Panc1 (cell line): ENCODE measurements at regions of chr15 and their contacts with region 1.

Region 1: DNA sequence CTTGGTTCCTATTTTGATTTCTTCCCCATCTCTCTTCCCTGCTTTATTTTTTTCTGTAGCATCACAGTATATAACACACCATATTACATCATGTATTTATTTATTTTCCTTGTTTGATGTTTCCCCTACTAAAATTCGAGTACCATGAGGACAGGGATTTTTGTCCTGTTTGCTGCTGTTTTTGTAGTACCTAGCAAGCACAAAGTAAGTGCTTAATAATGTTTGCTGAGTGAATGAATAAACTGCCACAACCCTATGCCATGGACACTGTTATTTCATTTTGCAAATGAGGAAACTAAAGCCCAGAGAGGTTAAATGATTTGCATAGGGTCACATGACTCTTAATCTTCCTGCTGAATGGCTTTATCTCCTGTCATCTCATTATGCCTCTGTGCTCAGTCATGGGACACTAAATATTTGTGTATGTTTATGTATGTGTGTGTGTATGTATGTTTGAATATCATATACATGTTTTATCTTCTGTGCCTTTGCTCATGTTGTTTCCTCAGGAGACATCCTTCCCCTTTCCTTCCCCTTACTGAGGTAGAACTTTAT is 26.1 kb upstream of the MGA start:
- DNase-seq: no peak
- ATAC-seq: no peak
- H3K4me3 ChIP-seq: no peak overlapping the region
- H3K27ac ChIP-seq: peak overlapping the region; percentile 36; the same call in 1 of the 2 replicates
- H3K4me1 ChIP-seq: peaks cover 35% of the 10 kb centered on the region
- H3K27me3 ChIP-seq: no peaks in the 10 kb centered on the region
- CTCF ChIP-seq: no peak

Region 2: GRCh38 chr15:41599061-41599460 is 35.1 kb before region 1 on chr15:
- CTCF ChIA-PET with region 1: interaction called, 3 read pairs
- POLR2A ChIA-PET with region 1: interaction called, 10 read pairs
- in situ Hi-C with region 1: no loop called
- intact Hi-C with region 1: no loop called
- DNase-seq: no peak
- ATAC-seq: no peak
- H3K4me3 ChIP-seq: no peak overlapping the region
- H3K27ac ChIP-seq: no peak overlapping the region
- H3K4me1 ChIP-seq: peaks cover 8% of the 10 kb centered on the region; the same call in 1 of the 2 replicates
- H3K27me3 ChIP-seq: no peaks in the 10 kb centered on the region
- CTCF ChIP-seq: no peak

Region 3: DNA sequence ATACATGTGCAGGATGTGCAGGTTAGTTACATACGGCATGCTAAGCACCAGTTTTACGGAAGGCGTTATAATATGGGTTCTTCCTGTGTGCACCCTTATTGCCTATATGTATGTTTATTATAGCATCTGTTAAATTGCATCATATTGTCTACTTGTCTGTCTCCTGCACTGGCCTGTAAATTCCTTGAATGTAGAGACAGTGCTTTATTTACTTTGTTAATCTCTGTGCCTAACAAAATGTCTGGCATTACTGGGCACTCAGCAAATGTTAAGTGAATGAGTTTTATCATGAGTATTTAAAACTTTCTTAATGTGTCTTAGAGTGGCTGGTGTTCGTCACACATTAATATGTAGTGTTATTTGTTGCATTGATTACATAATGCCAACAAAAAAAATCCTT is 49.8 kb after region 1 on chr15:
- CTCF ChIA-PET with region 1: no interaction called
- POLR2A ChIA-PET with region 1: no interaction called
- in situ Hi-C with region 1: no loop called
- intact Hi-C with region 1: no loop called
- DNase-seq: no peak
- ATAC-seq: peak; percentile 45; the same call in 1 of the 2 replicates
- H3K4me3 ChIP-seq: no peak overlapping the region
- H3K27ac ChIP-seq: peak overlapping the region; percentile 30; the same call in 1 of the 2 replicates
- H3K4me1 ChIP-seq: peaks cover 26% of the 10 kb centered on the region
- H3K27me3 ChIP-seq: no peaks in the 10 kb centered on the region
- CTCF ChIP-seq: no peak

Region 4: GRCh38 chr15:41695750-41696426 is 61.7 kb after region 1 on chr15:
- CTCF ChIA-PET with region 1: no interaction called
- POLR2A ChIA-PET with region 1: no interaction called
- in situ Hi-C with region 1: no loop called
- intact Hi-C with region 1: no loop called
- DNase-seq: no peak
- ATAC-seq: peak; percentile 60; the same call in 1 of the 2 replicates
- H3K4me3 ChIP-seq: no peak overlapping the region
- H3K27ac ChIP-seq: peak overlapping the region; percentile 60; the same call in 1 of the 2 replicates
- H3K4me1 ChIP-seq: peaks cover 22% of the 10 kb centered on the region
- H3K27me3 ChIP-seq: no peaks in the 10 kb centered on the region
- CTCF ChIP-seq: peak; percentile 60; the same call in 1 of the 2 replicates

Region 5: DNA sequence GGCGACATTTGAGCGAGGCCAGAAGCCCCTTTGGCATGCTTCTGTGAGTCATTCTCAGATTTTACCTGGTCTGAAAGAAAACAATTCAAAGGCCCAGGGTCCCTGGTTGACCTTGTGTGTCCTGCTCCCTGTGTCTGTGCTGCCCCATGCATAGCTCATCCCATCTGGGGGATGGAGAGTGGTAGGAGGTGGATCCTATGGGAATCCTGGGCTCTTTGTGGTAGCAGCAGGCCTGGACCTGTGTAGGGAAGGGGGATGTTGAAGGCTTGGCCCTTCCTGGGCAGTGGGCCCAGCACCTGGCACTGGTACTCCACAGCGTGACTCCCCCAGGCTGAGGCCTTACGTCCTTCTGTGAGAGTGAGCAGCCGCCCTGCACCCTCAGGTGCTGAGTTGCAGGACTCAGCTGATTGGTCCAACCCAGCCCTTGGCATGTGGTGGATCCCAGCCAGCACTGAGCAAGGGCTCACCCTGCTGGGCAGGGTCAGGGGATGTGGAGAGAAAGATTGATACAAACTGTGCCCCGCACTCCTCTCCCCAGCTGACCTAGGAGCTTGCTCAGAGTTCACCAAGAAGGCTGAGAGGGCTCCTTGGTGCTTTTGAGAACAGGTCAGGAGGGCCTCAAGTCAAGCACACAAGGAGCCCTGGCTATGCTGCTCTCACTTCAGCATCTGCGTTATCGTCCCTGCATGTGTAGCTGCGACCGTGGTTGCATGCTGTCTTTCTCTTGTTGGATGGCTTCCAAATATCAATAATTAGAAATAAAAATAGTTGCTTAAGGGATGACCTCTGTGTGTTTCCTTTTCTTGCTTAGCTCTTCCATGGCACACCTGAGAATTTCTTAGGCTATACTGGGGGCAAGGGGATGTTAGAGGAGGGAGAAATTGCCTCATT is 172.4 kb after region 1 on chr15:
- CTCF ChIA-PET with region 1: no interaction called
- POLR2A ChIA-PET with region 1: interaction called, 14 read pairs
- in situ Hi-C with region 1: no loop called
- intact Hi-C with region 1: no loop called
- DNase-seq: no peak
- ATAC-seq: 0 out of 2 replicates have a peak, but pooled peaks have one; percentile 31
- H3K4me3 ChIP-seq: no peak overlapping the region
- H3K27ac ChIP-seq: no peak overlapping the region
- H3K4me1 ChIP-seq: no peaks in the 10 kb centered on the region; the same call in 1 of the 2 replicates
- H3K27me3 ChIP-seq: no peaks in the 10 kb centered on the region
- CTCF ChIP-seq: no peak